HCT116 (cell line): ENCODE measurements at regions of chr12 and their contacts with region 1.

Region 1: GRCh38 chr12:33044447-33044846 is 147.9 kb upstream of the PKP2 start:
- DNase-seq: no peak
- ATAC-seq: no peak
- H3K4me3 ChIP-seq: no peak overlapping the region
- H3K27ac ChIP-seq: no peak overlapping the region
- H3K4me1 ChIP-seq: no peaks in the 10 kb centered on the region
- H3K27me3 ChIP-seq: no peaks in the 10 kb centered on the region
- CTCF ChIP-seq: no peak
- POLR2A ChIP-seq: no peak
- RAD21 ChIP-seq: no peak

Region 2: DNA sequence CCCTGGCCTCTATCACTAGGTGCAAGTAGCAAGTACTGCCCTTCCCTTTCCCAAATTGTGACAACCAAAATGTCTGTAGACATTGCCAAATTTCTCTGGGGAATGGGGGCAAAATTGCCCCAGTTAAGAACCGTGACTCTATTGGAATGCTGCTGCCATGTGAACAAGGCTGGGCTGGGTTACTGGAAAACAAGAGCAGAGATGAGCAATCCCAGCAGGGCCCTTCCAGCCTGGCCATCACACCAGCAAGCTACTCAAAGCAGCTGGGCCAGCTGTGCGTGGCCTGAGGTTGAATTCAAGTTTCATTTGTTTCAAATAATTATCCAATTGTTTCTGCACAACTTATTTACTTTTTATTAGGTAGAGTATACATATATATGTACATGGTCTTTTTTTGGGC is 44.4 kb before region 1 on chr12:
- CTCF ChIA-PET with region 1: no interaction called
- POLR2A ChIA-PET with region 1: no interaction called
- RAD21 ChIA-PET with region 1: no interaction called
- intact Hi-C with region 1: loop called (anchors 5 kb)
- DNase-seq: no peak
- ATAC-seq: no peak
- H3K4me3 ChIP-seq: no peak overlapping the region
- H3K27ac ChIP-seq: no peak overlapping the region
- H3K4me1 ChIP-seq: no peaks in the 10 kb centered on the region
- H3K27me3 ChIP-seq: no peaks in the 10 kb centered on the region
- CTCF ChIP-seq: no peak
- POLR2A ChIP-seq: no peak
- RAD21 ChIP-seq: no peak

Region 3: GRCh38 chr12:33116284-33116683 is 71.8 kb after region 1 on chr12:
- CTCF ChIA-PET with region 1: no interaction called
- POLR2A ChIA-PET with region 1: no interaction called
- RAD21 ChIA-PET with region 1: no interaction called
- intact Hi-C with region 1: no loop called
- DNase-seq: no peak
- ATAC-seq: no peak
- H3K4me3 ChIP-seq: no peak overlapping the region
- H3K27ac ChIP-seq: no peak overlapping the region
- H3K4me1 ChIP-seq: no peaks in the 10 kb centered on the region
- H3K27me3 ChIP-seq: no peaks in the 10 kb centered on the region
- CTCF ChIP-seq: no peak
- POLR2A ChIP-seq: no peak
- RAD21 ChIP-seq: no peak